ENCODE measurements at regions of chr1 and their contacts with region 1.

Region 1: GRCh38 chr1:41919764-41920397 is 1.2 kb upstream of the HIVEP3 start:
- DNase-seq: peak; percentile 42 to 84 (median 68)
- ATAC-seq: peak; percentile 84 to 90
- H3K4me3 Mint-ChIP-seq: peak overlapping the region; percentile 84 to 98 (median 92)
- H3K27ac Mint-ChIP-seq: peak overlapping the region; percentile 89 to 98 (median 96)
- H3K4me1 Mint-ChIP-seq: peaks cover 30 to 58% (median 57%) of the 10 kb centered on the region in 4 donors
- H3K27me3 Mint-ChIP-seq: peaks cover 0 to 3% (median 0%) of the 10 kb centered on the region in 5 donors

Region 2: DNA sequence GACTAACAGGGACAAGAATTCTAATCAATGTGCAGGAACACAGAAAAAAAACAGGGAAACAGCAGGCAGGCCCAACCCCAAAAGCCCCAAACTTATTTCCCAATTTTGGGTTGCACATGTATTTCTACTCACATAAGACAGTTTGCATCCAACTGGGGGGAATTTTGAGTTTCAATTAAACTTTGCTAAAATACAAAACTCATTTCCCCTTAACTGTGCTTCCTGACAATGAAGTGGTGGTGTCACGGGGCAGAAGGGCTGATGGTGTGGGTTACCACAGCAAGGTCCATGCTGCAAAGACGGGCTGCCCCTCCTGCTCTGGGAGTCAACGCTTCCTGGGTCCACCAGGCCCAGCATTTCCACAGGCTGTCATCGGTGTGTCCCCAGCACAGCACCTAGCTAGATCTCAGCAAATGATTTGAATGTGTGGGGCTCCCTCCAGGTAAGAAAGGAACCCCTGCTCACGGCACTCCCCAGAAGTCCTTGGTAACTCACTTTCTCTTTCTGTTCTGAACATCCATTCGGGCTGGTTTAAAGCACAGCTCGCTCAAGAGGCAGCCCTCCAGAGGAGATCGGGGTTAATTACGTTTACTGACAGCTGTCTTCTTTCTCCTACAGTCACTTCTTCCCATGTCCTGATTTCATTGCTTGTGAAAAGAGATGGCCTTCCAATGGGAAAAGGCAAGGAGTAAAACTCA is 28.5 kb before region 1 on chr1:
- POLR2A ChIA-PET with region 1: interaction called, 114 read pairs
- DNase-seq: peak; percentile 18 to 77 (median 66)
- ATAC-seq: peak; percentile 97 to 99
- H3K4me3 Mint-ChIP-seq: peak overlapping the region; percentile 74 to 88 (median 84)
- H3K27ac Mint-ChIP-seq: peak overlapping the region; percentile 48 to 97 (median 92)
- H3K4me1 Mint-ChIP-seq: peaks cover 19 to 63% (median 40%) of the 10 kb centered on the region in 4 donors
- H3K27me3 Mint-ChIP-seq: no peaks in the 10 kb centered on the region

Region 3: GRCh38 chr1:41898191-41898713 is 21.6 kb before region 1 on chr1:
- POLR2A ChIA-PET with region 1: interaction called, 114 read pairs
- DNase-seq: peak in 9 of 10 donors; percentile 35 to 92 (median 76)
- ATAC-seq: peak; percentile 96 to 99
- H3K4me3 Mint-ChIP-seq: peak overlapping the region in 9 of 10 donors; percentile 2 to 75 (median 52)
- H3K27ac Mint-ChIP-seq: peak overlapping the region; percentile 69 to 99 (median 89)
- H3K4me1 Mint-ChIP-seq: peaks cover 35 to 84% (median 73%) of the 10 kb centered on the region in 4 donors
- H3K27me3 Mint-ChIP-seq: no peaks in the 10 kb centered on the region

Region 4: GRCh38 chr1:41936118-41936517 is 16.2 kb after region 1 on chr1:
- POLR2A ChIA-PET with region 1: no interaction called
- DNase-seq: no peak
- ATAC-seq: no peak
- H3K4me3 Mint-ChIP-seq: no peak overlapping the region
- H3K27ac Mint-ChIP-seq: peak overlapping the region in 1 of 10 donors; percentile 18
- H3K4me1 Mint-ChIP-seq: peaks cover 0 to under 1% (median 0%) of the 10 kb centered on the region in 4 donors
- H3K27me3 Mint-ChIP-seq: peaks cover 0 to 1% (median 0%) of the 10 kb centered on the region in 5 donors